B cell (primary cell): ENCODE measurements at regions of chr19 and their contacts with region 1.

Region 1: DNA sequence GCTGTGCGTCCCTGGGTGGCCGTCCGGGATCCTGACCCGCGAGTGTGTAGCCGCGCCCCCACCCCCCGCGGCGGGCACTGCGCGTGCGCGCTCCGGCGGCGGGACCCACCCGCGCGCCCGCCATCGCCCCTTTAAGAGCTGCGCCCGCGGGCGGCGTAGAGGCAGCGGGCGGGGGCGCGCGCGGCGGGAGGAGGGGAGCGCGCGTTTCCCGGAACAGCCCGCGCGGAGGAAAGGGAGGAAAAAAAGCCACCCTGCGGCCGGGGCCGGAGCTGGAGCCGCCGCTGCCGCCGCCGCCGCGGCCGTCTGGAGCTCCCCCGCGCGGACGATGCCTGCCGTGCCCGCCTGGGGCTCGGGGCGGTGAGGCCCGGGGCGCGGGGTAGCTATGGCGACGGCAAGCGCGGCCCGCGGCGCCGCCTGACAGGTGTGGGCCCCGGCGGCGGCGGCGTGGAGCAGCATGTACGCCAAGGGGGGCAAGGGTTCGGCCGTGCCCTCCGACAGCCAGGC is at the start of gene SSBP4:
- DNase-seq: peak; percentile 88
- ATAC-seq: peak; percentile 64
- H3K4me3 ChIP-seq: peak within 1 kb of the TSS in 4 of 5 experiments; percentile 41 to 67 (median 52)
- H3K4me3 Mint-ChIP-seq: peak within 1 kb of the TSS; percentile 85
- H3K27ac ChIP-seq: no peak within 1 kb of the TSS
- H3K27ac Mint-ChIP-seq: peak within 1 kb of the TSS; percentile 71
- H3K4me1 ChIP-seq: peaks cover 70 to 77% of the 10 kb centered on the region in 2 donors
- H3K4me1 Mint-ChIP-seq: peaks cover 66% of the 10 kb centered on the region
- H3K27me3 ChIP-seq: peaks cover 0 to 50% (median 31%) of the 10 kb centered on the region in 4 experiments
- H3K27me3 Mint-ChIP-seq: peaks cover 31% of the 10 kb centered on the region
- CTCF ChIP-seq: peak; percentile 55
- total RNA-seq, gene SSBP4: 37.0 and 43.5 TPM in 2 replicates

Region 2: DNA sequence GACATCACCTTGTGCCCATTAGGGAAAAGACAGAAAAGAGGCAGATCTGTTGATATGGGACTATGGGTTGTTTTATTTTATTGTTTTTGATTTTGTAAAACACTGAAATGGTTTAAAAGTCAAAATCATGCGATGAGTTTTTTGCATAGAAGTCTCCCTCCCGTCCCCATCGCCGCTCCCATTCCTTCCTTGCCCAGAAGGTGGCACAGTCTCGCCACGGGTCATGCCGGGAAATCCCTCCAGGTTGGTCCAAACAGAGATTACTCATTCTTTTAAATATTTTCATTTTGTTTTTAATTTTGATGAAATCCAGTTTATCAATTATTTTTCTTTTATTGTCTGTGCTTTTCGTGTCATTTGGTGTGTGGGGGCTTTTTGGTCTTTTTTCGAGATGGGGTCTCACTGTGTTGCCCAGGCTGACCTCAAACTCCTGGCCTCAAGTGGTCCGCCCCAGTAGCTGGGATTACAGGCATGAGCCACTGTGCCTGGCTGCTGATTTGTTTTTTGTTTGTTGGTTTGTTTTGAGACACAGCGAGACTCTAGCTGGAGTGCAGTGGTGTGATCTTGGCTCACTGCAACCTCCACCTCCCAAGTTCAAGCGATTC is 69.6 kb before region 1 on chr19:
- CTCF ChIA-PET with region 1: interaction called, 49 read pairs
- POLR2A ChIA-PET with region 1: no interaction called
- intact Hi-C with region 1: no loop called
- DNase-seq: peak; percentile 40
- ATAC-seq: peak; percentile 61
- H3K4me3 ChIP-seq: no peak overlapping the region
- H3K4me3 Mint-ChIP-seq: no peak overlapping the region
- H3K27ac ChIP-seq: no peak overlapping the region
- H3K27ac Mint-ChIP-seq: no peak overlapping the region
- H3K4me1 ChIP-seq: no peaks in the 10 kb centered on the region
- H3K4me1 Mint-ChIP-seq: no peaks in the 10 kb centered on the region
- H3K27me3 ChIP-seq: no peaks in the 10 kb centered on the region
- H3K27me3 Mint-ChIP-seq: no peaks in the 10 kb centered on the region
- CTCF ChIP-seq: peak; percentile 51